Heart left ventricle (tissue), 16 donors: ENCODE measurements at regions of chr3 and their contacts with region 1.

Region 1: DNA sequence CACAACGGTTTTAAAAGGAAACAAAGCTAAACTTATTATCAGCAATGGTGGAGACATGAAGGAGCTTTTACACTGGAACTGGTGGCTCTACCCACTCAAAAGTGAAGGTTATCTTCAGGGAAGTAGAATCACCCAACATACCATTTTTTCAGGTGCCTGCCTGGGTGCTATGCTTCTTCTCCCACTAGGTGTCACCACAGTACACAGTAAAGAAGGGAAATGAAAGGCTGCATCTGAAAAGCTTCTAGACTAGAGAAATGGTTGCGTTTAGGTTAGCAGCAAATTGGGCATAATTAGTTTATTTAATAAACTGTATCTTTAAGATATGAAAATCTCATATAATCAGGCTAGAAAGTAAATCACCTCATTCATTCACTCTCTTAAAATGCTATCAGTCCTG is 47.0 kb upstream of the SELENOK start:
- DNase-seq: no peak
- ATAC-seq: peak in 2 of 4 donors; percentile 53 to 67
- H3K4me3 ChIP-seq: no peak overlapping the region
- H3K27ac ChIP-seq: no peak overlapping the region
- H3K4me1 ChIP-seq: no peaks in the 10 kb centered on the region
- H3K27me3 ChIP-seq: peaks cover 0 to 35% (median 2%) of the 10 kb centered on the region in 9 donors
- CTCF ChIP-seq: peak; percentile 66 to 84 (median 74)
- POLR2A ChIP-seq: no peak

Region 2: DNA sequence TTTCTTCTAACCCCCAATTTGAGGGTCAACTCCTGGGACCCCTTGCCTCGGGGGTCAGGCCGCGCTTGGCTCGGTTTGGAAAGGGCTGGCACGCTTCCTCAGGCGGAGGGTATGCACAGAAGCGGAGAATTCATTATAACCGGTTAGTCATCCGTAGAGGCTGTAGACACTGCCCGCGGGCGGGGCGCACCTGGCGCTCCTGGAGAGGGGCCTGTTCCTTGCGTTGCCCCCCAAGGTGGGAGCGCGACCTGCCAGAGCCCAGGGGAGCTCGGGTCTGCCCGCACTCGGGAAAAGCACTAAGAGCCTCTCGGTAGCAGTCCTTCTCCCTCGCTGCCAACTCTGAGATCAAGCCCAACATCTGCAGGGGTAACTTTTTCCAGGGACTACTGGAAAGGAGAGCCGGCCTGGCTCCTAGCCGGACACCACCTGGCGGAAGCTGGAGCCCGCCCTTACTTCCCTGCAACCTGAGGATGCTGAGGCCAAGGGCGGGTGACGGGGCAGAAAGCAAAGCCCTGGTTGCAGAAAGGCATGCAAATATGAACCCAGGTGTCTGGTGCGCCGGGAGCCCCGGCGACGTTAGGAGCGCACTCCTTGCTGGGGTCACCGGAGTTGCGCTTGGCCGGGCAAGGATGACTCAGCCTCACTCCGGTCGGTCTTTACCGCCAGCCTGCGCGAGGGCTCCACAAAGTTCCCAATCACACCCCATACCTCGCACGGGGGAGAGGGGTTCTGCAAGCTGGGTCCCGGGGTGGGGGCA is 182.2 kb after region 1 on chr3:
- intact Hi-C with region 1: loop called in 4 of 10 experiments (anchors 5 to 10 kb)
- DNase-seq: peak in 1 of 5 donors; percentile 36
- ATAC-seq: peak in 3 of 4 donors; percentile 30 to 44 (median 34)
- H3K4me3 ChIP-seq: peak overlapping the region; percentile 47 to 75 (median 66)
- H3K27ac ChIP-seq: peak overlapping the region in 3 of 12 donors; percentile 65 to 77 (median 76)
- H3K4me1 ChIP-seq: peaks cover 0 to 32% (median 8%) of the 10 kb centered on the region in 12 donors
- H3K27me3 ChIP-seq: peaks cover 0 to 64% (median 3%) of the 10 kb centered on the region in 9 donors
- CTCF ChIP-seq: no peak
- POLR2A ChIP-seq: no peak

Region 3: DNA sequence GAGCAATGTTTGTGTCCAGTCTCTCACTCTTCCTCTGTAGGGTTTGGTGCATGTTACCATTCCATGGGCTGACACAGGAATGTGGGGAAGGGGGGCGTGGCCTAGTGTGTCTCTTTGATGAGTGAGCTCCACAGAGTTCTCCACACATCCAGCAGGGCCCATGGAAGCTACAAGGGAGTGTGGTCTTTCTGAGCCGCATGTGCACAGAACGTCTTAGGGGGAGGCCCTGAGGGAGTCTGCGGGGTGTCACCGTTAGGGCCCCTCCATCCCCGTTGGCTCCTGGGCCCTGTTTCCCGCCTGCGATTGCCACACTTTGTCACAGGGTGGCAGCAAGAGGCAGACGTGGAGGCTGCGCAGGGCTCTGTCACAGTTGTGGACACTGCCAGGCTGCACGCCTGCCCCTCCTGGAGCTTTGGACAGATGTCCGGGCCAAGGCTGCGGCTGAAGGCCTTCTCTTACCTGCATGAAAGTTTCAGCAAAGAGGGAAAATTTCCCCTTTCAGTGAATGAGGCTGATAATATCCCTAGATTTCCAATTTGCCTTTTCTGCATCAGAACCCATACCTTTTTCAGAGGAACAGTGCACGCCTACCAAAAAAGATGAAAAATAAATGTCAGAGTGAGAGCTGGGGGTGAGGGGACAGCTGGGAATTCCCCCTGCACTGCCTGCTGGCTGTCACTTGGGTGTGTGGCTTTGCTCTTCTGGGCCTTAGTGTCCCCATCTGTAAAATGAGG is 208.0 kb after region 1 on chr3:
- intact Hi-C with region 1: loop called in 3 of 10 experiments (anchors 10 kb)
- DNase-seq: peak; percentile 37 to 79 (median 56)
- ATAC-seq: peak; percentile 88 to 94 (median 92)
- H3K4me3 ChIP-seq: no peak overlapping the region
- H3K27ac ChIP-seq: no peak overlapping the region
- H3K4me1 ChIP-seq: peaks cover 0 to 10% (median 0%) of the 10 kb centered on the region in 12 donors
- H3K27me3 ChIP-seq: no peaks in the 10 kb centered on the region
- CTCF ChIP-seq: peak; percentile 30 to 70 (median 59)
- POLR2A ChIP-seq: no peak

Region 4: DNA sequence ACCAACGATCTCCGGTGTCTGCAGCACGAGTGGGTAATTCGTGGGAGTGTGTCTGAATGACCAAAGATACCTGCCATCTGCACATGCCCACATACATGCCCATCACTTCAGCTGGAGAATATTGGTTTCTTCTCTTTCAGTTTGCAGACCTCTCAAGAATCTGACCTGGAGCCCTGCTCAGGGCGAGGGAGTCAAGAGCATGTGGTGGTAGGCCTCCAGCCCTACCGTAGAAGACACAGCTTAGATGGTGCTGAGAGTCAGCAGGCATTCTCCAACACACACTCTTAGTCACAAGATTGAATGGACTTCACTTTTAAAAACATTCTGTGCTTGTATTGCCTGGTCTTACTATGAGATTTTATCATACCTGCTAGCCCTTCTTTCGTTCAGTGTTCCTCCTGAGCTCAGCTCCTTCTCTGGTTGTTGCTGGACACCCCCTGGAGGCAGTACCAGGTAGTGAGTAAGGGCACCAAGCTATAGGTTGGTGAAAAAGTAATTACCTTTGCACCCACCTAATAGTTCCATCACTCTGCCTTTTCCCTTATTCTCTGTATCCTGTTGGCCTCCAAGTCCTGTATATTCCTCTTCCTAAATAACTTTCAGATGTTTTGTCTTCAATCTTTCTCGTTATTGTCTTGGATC is 435.7 kb after region 1 on chr3:
- intact Hi-C with region 1: loop called in 7 of 10 experiments (anchors 2 to 10 kb)
- DNase-seq: no peak
- ATAC-seq: peak in 3 of 4 donors; percentile 62 to 69 (median 65)
- H3K4me3 ChIP-seq: no peak overlapping the region
- H3K27ac ChIP-seq: no peak overlapping the region
- H3K4me1 ChIP-seq: peaks cover 0 to 17% (median 0%) of the 10 kb centered on the region in 12 donors
- H3K27me3 ChIP-seq: no peaks in the 10 kb centered on the region
- CTCF ChIP-seq: peak in 11 of 12 donors; percentile 23 to 59 (median 43)
- POLR2A ChIP-seq: no peak